MCF 10A (cell line): ENCODE measurements at regions of chr17 and their contacts with region 1.

Region 1: GRCh38 chr17:42997984-42998938 is at the start of gene RPL27:
- DNase-seq: peak; percentile 99
- H3K4me3 Mint-ChIP-seq: peak within 1 kb of the TSS; percentile 95
- H3K27ac Mint-ChIP-seq: peak within 1 kb of the TSS; percentile 96
- H3K4me1 Mint-ChIP-seq: peaks cover 23% of the 10 kb centered on the region
- H3K27me3 Mint-ChIP-seq: no peaks in the 10 kb centered on the region
- CTCF ChIP-seq: peak; percentile 77
- total RNA-seq, gene RPL27: 970 and 1,226 TPM in 2 replicates

Region 2: GRCh38 chr17:42832974-42833766 is 165.1 kb before region 1 on chr17 and contains the start of gene PSME3:
- CTCF ChIA-PET with region 1: no interaction called
- POLR2A ChIA-PET with region 1: interaction called, 29 read pairs
- intact Hi-C with region 1: no loop called
- DNase-seq: peak; percentile 87
- H3K4me3 Mint-ChIP-seq: peak within 1 kb of the TSS; percentile 96
- H3K27ac Mint-ChIP-seq: peak within 1 kb of the TSS; percentile 99
- H3K4me1 Mint-ChIP-seq: peaks cover 25% of the 10 kb centered on the region
- H3K27me3 Mint-ChIP-seq: no peaks in the 10 kb centered on the region
- CTCF ChIP-seq: no peak
- total RNA-seq, gene PSME3: 220 and 232 TPM in 2 replicates

Region 3: DNA sequence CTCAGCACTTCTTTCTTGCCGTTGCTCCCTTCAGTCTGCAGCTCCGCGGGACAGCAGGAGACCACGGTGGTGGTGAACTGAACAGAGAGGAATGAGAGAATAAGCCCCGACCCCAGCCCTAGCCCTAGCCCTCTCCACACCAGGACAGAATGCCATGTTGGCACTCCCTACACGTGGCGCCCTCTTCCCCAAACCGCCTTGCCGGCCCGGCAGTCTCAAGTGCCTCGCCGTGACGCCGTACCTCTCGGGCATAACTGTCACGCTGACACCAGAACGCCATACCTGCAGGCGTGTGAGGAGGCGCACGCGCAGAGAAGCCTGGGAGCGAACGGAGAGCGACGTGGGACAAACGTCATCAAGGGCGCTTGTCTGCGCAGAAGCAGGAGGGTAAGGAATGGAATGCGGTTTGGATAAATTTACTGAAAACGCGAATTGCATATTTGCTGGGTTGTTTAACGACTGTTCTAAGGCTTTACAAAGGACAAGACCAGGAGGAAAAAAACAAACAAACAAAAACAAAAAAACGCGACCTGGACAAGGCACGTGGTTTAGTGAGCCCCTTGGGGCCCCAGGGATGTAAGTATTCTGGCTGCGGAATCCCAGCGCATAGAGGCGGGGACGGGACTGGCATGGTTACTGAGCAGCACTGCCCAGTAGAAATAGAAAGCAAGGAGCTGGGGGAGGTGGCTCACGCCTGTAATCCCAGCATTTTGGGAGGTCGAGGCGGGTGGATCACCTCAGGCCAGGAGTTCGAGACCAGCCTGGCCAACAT is 33.9 kb before region 1 on chr17 and contains the start of gene AARSD1:
- CTCF ChIA-PET with region 1: interaction called, 11 read pairs
- POLR2A ChIA-PET with region 1: interaction called, 35 read pairs
- intact Hi-C with region 1: loop called (anchors 1 kb)
- DNase-seq: peak; percentile 90
- H3K4me3 Mint-ChIP-seq: peak within 1 kb of the TSS; percentile 96
- H3K27ac Mint-ChIP-seq: peak within 1 kb of the TSS; percentile 95
- H3K4me1 Mint-ChIP-seq: peaks cover 10% of the 10 kb centered on the region
- H3K27me3 Mint-ChIP-seq: no peaks in the 10 kb centered on the region
- CTCF ChIP-seq: no peak
- total RNA-seq, gene AARSD1: 48.9 and 79.9 TPM in 2 replicates

Region 4: DNA sequence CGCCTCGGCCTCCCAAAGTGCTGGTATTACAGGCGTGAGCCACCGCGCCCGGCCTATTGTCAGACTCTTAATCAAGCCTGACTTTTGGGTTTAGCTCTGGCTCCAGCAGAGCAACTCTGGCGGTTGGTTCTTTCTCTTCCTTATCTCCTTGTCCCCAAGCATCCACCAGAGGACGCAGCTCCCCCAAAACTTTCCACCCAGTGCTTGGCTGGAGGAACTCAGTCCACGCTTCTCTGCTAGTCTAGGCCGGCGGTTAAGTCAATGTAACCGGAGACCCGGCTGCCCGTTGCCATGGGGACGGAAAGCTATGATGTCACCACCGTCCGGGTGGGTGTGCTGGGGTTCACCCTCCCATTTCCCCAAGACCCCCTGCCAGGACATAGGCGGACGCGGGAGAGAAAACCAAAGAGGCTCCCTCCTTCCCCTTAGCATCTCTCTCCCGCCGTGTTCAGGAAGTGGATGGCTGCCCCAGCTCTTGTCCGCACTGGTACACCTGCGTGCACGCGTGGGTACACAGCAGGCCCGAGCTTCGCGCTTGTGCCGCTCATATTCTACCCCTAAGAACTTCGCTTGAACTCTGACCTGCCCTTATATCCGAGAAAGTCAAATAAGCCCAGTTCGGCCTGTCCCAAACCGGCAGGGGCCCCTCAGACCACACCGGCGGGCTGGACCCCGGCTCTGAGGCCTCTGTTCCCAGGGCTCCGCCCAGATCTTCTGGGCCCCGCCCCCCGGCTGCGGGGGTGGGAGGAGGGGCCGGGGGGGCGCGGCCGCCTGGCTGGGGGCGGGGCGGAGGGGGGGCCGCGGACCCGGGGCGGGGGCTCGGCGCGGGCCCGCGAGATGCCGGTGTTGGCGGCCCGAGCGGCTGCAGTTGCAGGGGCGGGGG is 26.4 kb after region 1 on chr17 and contains the start of gene RND2:
- CTCF ChIA-PET with region 1: interaction called, 4 read pairs
- POLR2A ChIA-PET with region 1: interaction called, 58 read pairs
- intact Hi-C with region 1: no loop called
- DNase-seq: peak; percentile 93
- H3K4me3 Mint-ChIP-seq: peak within 1 kb of the TSS; percentile 71
- H3K27ac Mint-ChIP-seq: peak within 1 kb of the TSS; percentile 61
- H3K4me1 Mint-ChIP-seq: peaks cover 14% of the 10 kb centered on the region
- H3K27me3 Mint-ChIP-seq: no peaks in the 10 kb centered on the region
- CTCF ChIP-seq: peak; percentile 51
- total RNA-seq, gene RND2: 0.16 TPM in 1 of 2 replicates, not detected in the other

Region 5: DNA sequence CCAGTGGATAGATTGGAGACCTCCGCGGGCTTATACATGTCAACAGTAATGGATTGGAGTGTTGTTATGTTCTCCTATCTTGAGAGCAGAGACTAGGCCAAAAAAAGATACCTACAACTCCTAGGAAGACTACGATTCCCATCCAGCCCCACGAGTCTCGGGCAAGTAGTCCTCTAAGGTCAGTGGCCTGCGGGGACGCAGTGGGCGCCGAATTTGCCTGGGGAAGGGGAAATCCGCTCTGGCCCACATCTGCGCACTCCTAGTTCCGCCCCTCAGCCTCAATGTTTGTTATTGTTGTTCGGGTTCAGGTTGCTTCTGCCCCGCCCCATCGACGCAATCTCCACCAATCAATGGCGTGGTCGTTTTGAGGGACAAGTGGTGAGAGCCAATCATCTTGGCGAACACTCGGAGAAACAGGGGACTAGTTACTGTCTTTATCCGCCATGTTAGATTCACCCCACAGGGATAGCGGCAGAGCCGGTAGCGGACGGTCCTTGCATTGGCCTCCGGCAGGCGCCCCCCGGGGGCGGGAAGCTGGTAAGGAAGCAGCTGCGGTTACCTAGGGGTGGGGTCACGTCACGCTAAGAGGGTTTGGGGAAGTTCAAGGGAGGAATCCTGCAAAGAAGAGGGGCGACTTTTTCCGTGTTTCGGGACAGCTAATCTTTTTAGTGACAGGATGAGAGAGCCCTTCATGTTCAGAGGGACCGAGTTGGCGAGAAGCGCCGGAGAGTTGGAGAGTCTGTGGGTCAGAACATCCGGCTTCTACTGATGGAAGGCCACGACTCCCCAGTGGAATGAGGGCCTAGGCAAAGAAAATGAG is 172.7 kb after region 1 on chr17 and contains the start of gene NBR1:
- CTCF ChIA-PET with region 1: interaction called, 3 read pairs
- POLR2A ChIA-PET with region 1: interaction called, 32 read pairs
- intact Hi-C with region 1: no loop called
- DNase-seq: peak; percentile 99
- H3K4me3 Mint-ChIP-seq: no peak within 1 kb of the TSS
- H3K27ac Mint-ChIP-seq: no peak within 1 kb of the TSS
- H3K4me1 Mint-ChIP-seq: no peaks in the 10 kb centered on the region
- H3K27me3 Mint-ChIP-seq: no peaks in the 10 kb centered on the region
- CTCF ChIP-seq: no peak
- total RNA-seq, gene NBR1: 105 and 106 TPM in 2 replicates